PC-3 (cell line): ENCODE measurements at regions of chr7 and their contacts with region 1.

Region 1: DNA sequence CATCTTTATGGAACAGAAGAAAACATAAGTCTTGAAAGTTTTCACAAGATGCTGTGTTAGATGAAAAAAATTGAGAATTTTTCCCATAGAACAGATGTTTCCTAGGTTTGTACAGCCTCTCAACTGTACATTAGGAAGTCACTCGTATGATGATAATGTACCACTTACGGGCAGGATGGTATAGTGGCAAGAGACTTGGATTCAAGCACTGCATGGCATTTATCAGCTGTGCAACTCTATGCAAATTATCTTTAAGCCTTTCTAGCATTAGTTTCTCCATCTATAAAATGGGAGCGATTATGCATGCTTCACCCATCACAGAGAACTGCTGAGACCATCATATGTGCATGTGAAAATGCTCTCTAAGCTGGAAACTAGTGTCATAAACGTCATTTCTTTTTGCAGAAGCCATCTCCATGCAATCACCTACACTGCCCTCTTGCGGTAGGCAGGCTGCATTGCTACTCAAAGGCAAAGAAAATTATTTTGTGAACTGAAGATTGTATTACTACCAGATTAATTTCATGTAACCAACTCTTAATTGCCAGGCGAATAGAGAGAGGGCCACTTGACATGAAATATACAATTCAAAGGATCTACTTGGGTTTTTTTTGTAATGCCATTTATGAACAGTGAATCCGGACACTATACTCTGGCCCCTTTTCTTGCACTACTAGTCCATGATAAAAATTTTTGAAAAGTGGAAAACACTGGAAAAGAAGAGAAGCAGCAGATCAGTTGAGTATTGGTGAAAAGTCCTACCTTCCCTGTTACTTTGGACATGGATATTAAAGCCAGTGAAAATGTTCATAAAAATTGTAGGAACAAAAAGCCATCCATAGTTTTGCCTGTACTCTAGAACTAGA is 102.3 kb downstream of the JAZF1 start:
- DNase-seq: peak; percentile 65
- ATAC-seq: peak; percentile 51
- H3K4me3 ChIP-seq: no peak overlapping the region
- H3K27ac ChIP-seq: no peak overlapping the region
- H3K4me1 ChIP-seq: no peaks in the 10 kb centered on the region
- H3K27me3 ChIP-seq: no peaks in the 10 kb centered on the region
- CTCF ChIP-seq: peak; percentile 96

Region 2: GRCh38 chr7:27364344-27365100 is 713.7 kb before region 1 on chr7:
- CTCF ChIA-PET with region 1: no interaction called
- POLR2A ChIA-PET with region 1: no interaction called
- intact Hi-C with region 1: no loop called
- DNase-seq: peak; percentile 50
- ATAC-seq: peak; percentile 57
- H3K4me3 ChIP-seq: peak overlapping the region; percentile 22; the same call in 1 of the 2 replicates
- H3K27ac ChIP-seq: peak overlapping the region; percentile 6
- H3K4me1 ChIP-seq: peaks cover 13% of the 10 kb centered on the region
- H3K27me3 ChIP-seq: no peaks in the 10 kb centered on the region
- CTCF ChIP-seq: no peak

Region 3: DNA sequence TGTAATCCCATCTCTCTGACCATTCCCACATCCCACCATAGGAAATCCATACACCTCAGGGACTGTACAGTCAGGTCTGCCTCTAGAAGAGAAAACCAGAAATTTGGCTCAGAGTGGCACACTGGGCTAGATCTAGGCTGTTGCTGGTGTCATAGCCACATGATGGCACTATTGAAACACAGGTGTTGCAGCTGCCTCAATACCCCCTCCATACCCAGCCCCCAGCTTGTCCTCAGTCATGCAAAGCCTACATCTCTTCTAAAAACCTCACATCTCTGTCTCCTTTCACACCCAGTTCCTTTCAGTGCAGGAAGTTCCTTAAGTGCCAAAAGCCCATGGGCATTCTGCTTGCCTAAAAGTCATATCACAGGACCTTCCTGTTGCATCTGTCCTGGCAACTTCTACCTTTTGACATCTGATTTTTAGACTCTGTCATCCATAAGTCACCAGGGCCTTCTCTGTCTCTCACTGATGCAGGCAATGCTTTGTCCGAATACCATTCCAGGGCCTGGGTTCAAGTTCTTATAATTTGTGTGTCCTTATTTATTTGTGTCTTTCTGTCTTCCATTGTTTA is 388.6 kb before region 1 on chr7:
- CTCF ChIA-PET with region 1: no interaction called
- POLR2A ChIA-PET with region 1: no interaction called
- intact Hi-C with region 1: loop called (anchors 10 kb)
- DNase-seq: peak; percentile 67
- ATAC-seq: peak; percentile 93
- H3K4me3 ChIP-seq: no peak overlapping the region
- H3K27ac ChIP-seq: no peak overlapping the region
- H3K4me1 ChIP-seq: peaks cover 18% of the 10 kb centered on the region
- H3K27me3 ChIP-seq: no peaks in the 10 kb centered on the region
- CTCF ChIP-seq: peak; percentile 89

Region 4: GRCh38 chr7:27929127-27929526 is 149.1 kb before region 1 on chr7:
- CTCF ChIA-PET with region 1: no interaction called
- POLR2A ChIA-PET with region 1: no interaction called
- intact Hi-C with region 1: loop called (anchors 1 kb)
- DNase-seq: no peak
- ATAC-seq: no peak; the same call in 1 of the 2 replicates
- H3K4me3 ChIP-seq: no peak overlapping the region
- H3K27ac ChIP-seq: no peak overlapping the region
- H3K4me1 ChIP-seq: peaks cover 10% of the 10 kb centered on the region
- H3K27me3 ChIP-seq: no peaks in the 10 kb centered on the region
- CTCF ChIP-seq: peak; percentile 28; the same call in 1 of the 2 replicates

Region 5: GRCh38 chr7:28037220-28038010 is 40.9 kb before region 1 on chr7:
- CTCF ChIA-PET with region 1: no interaction called
- POLR2A ChIA-PET with region 1: no interaction called
- intact Hi-C with region 1: loop called (anchors 1 kb)
- DNase-seq: peak; percentile 96
- ATAC-seq: peak; percentile 76
- H3K4me3 ChIP-seq: peak overlapping the region; percentile 57
- H3K27ac ChIP-seq: peak overlapping the region; percentile 90
- H3K4me1 ChIP-seq: peaks cover 70% of the 10 kb centered on the region
- H3K27me3 ChIP-seq: no peaks in the 10 kb centered on the region
- CTCF ChIP-seq: no peak

Region 6: GRCh38 chr7:28062197-28062991 is 15.9 kb before region 1 on chr7:
- CTCF ChIA-PET with region 1: interaction called, 17 read pairs
- POLR2A ChIA-PET with region 1: no interaction called
- intact Hi-C with region 1: loop called (anchors 1 kb)
- DNase-seq: peak; percentile 73
- ATAC-seq: peak; percentile 89
- H3K4me3 ChIP-seq: peak overlapping the region; percentile 9; the same call in 1 of the 2 replicates
- H3K27ac ChIP-seq: peak overlapping the region; percentile 63
- H3K4me1 ChIP-seq: peaks cover 29% of the 10 kb centered on the region
- H3K27me3 ChIP-seq: no peaks in the 10 kb centered on the region
- CTCF ChIP-seq: peak; percentile 85

Region 7: GRCh38 chr7:28123752-28124151 is 45.5 kb after region 1 on chr7:
- CTCF ChIA-PET with region 1: no interaction called
- POLR2A ChIA-PET with region 1: no interaction called
- intact Hi-C with region 1: no loop called
- DNase-seq: no peak
- ATAC-seq: no peak
- H3K4me3 ChIP-seq: no peak overlapping the region
- H3K27ac ChIP-seq: no peak overlapping the region
- H3K4me1 ChIP-seq: no peaks in the 10 kb centered on the region
- H3K27me3 ChIP-seq: no peaks in the 10 kb centered on the region
- CTCF ChIP-seq: no peak

Region 8: GRCh38 chr7:28144266-28144665 is 66.0 kb after region 1 on chr7:
- CTCF ChIA-PET with region 1: no interaction called
- POLR2A ChIA-PET with region 1: interaction called, 14 read pairs
- intact Hi-C with region 1: no loop called
- DNase-seq: no peak
- ATAC-seq: no peak; the same call in 1 of the 2 replicates
- H3K4me3 ChIP-seq: no peak overlapping the region
- H3K27ac ChIP-seq: no peak overlapping the region
- H3K4me1 ChIP-seq: no peaks in the 10 kb centered on the region
- H3K27me3 ChIP-seq: no peaks in the 10 kb centered on the region
- CTCF ChIP-seq: no peak